Activated T-helper 1 cell treated with anti-CD3 and anti-CD28 coated beads, Interleukin-12 subunit alpha, Interleukin-12 subunit beta, Interleukin-2, Interleukin-4 antibody, amounts not matched to agents 30 ng/mL and 10 ng/mL and 1 ng/mL, durations not matched to agents 14 hours and 24 hours and 36 hours (primary cell): ENCODE measurements at regions of chr9 and their contacts with region 1.

Region 1: GRCh38 chr9:31347082-31347617 is 1037.3 kb upstream of the ACO1 start:
- DNase-seq: peak; percentile 27
- H3K4me3 Mint-ChIP-seq: peak overlapping the region; percentile 63
- H3K27ac Mint-ChIP-seq: peak overlapping the region; percentile 88
- H3K4me1 Mint-ChIP-seq: peaks cover 37% of the 10 kb centered on the region
- H3K27me3 Mint-ChIP-seq: no peaks in the 10 kb centered on the region

Region 2: GRCh38 chr9:31302620-31303418 is 44.3 kb before region 1 on chr9:
- intact Hi-C with region 1: loop called (anchors 2 kb)
- DNase-seq: no peak
- H3K4me3 Mint-ChIP-seq: no peak overlapping the region
- H3K27ac Mint-ChIP-seq: no peak overlapping the region
- H3K4me1 Mint-ChIP-seq: peaks cover 16% of the 10 kb centered on the region
- H3K27me3 Mint-ChIP-seq: no peaks in the 10 kb centered on the region

Region 3: GRCh38 chr9:31359071-31359470 is 11.9 kb after region 1 on chr9:
- intact Hi-C with region 1: loop called (anchors 2 kb)
- DNase-seq: no peak
- H3K4me3 Mint-ChIP-seq: no peak overlapping the region
- H3K27ac Mint-ChIP-seq: no peak overlapping the region
- H3K4me1 Mint-ChIP-seq: no peaks in the 10 kb centered on the region
- H3K27me3 Mint-ChIP-seq: no peaks in the 10 kb centered on the region

Region 4: GRCh38 chr9:31702957-31703356 is 355.8 kb after region 1 on chr9:
- intact Hi-C with region 1: no loop called
- DNase-seq: no peak
- H3K4me3 Mint-ChIP-seq: no peak overlapping the region
- H3K27ac Mint-ChIP-seq: no peak overlapping the region
- H3K4me1 Mint-ChIP-seq: no peaks in the 10 kb centered on the region
- H3K27me3 Mint-ChIP-seq: no peaks in the 10 kb centered on the region